HEK293T (cell line): ENCODE measurements at regions of chr16 and their contacts with region 1.

Region 1: DNA sequence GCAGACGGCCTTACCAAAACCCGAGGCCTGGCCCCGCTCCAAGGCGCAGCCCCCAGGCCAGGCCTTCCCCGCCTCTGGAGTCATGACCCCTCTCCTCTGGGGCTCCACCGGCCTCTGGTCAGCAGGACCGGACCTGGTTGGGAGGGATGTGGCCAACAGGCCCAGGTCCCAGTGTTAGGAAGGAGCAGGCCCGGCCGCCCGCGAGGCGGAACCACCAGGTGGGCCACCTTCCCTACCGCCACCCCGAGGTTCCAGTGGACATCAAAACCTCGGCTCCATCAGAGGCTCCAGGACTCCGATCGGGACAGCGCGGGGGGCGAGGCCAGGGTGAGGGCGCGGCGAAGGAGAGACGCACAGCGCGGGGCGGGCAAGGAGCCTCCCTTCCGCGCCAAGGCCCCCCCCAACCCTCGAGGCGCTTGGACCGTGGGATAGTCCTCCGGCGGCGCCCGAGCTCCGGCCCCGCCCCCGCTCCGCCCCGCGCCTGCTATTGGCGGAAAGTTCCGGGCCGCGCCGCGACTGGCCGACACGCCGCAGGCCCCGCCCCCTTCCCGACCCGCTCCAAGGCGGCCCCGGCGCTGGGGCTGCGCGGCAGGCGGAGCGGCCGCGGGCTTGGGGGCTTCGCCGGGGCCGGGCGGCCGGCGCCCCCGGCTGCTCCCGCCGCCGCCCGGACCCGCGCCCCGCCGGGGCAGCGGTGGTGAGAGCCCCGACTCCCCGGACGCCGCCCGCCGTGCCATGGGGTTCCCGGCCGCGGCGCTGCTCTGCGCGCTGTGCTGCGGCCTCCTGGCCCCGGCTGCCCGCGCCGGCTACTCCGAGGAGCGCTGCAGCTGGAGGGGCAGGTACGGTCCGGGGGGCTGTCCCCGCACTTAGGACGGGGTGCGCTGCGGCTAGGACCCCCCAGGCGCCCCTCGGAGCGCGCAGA is at the start of gene METRN:
- DNase-seq: peak; percentile 85

Region 2: DNA sequence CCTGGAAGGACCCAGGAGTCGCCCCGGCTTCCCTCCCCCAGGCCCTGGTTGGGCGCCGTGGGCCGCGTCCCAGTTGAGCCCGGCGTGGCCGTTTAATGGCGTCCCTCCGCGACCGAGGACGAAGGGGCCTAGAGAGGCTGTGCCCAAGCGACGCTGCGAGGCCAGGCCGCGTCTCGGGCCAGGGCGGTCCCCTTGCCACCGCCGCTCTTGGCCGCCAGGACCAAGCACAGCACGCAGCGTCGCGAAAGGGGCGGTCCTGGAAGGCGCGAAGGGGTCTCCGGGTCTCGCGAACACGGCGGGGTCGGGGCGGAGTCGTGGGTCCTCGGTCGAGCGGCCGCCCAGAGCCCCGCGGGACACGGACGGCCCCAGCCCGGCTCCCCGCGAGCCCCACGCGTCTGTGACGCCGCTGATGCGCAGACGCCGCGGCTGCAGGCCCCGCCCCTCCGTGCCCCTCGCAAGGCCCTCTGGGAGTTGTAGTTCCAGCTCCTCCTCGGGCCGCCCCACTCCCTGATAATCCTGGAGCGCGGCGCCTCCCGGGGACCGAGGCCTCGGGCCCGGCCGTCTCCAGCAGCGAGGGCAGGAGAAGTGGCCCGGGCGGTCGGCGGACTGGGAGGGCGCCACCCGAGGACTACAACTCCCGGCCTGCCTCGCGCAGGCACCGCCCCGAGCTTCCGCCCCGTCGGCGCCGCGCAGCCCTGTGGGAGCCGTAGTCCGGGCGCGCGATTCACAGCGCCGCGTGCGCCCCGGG is 187.6 kb before region 1 on chr16 and contains the start of gene CAPN15:
- CTCF ChIA-PET with region 1: no interaction called
- POLR2A ChIA-PET with region 1: no interaction called
- DNase-seq: peak; percentile 87

Region 3: GRCh38 chr16:728131-728889 is 13.5 kb after region 1 on chr16:
- CTCF ChIA-PET with region 1: interaction called, 6 read pairs
- POLR2A ChIA-PET with region 1: interaction called, 47 read pairs
- DNase-seq: peak; percentile 69